ENCODE measurements at regions of chr15 and their contacts with region 1.

Region 1: GRCh38 chr15:70768257-70768883 is 5.0 kb upstream of the UACA start:
- DNase-seq: no peak
- H3K4me3 ChIP-seq: no peak overlapping the region
- H3K4me3 Mint-ChIP-seq: peak overlapping the region; percentile 7
- H3K27ac Mint-ChIP-seq: peak overlapping the region; percentile 2
- H3K4me1 ChIP-seq: peaks cover 51% of the 10 kb centered on the region
- H3K4me1 Mint-ChIP-seq: peaks cover 47% of the 10 kb centered on the region
- H3K27me3 ChIP-seq: no peaks in the 10 kb centered on the region
- H3K27me3 Mint-ChIP-seq: no peaks in the 10 kb centered on the region
- CTCF ChIP-seq: no peak

Region 2: GRCh38 chr15:70690491-70691257 is 77.7 kb before region 1 on chr15:
- CTCF ChIA-PET with region 1: no interaction called
- POLR2A ChIA-PET with region 1: no interaction called
- intact Hi-C with region 1: no loop called
- DNase-seq: no peak
- H3K4me3 ChIP-seq: no peak overlapping the region
- H3K4me3 Mint-ChIP-seq: no peak overlapping the region
- H3K27ac Mint-ChIP-seq: no peak overlapping the region
- H3K4me1 ChIP-seq: peaks cover 30% of the 10 kb centered on the region
- H3K4me1 Mint-ChIP-seq: peaks cover 12% of the 10 kb centered on the region
- H3K27me3 ChIP-seq: no peaks in the 10 kb centered on the region
- H3K27me3 Mint-ChIP-seq: no peaks in the 10 kb centered on the region
- CTCF ChIP-seq: no peak

Region 3: DNA sequence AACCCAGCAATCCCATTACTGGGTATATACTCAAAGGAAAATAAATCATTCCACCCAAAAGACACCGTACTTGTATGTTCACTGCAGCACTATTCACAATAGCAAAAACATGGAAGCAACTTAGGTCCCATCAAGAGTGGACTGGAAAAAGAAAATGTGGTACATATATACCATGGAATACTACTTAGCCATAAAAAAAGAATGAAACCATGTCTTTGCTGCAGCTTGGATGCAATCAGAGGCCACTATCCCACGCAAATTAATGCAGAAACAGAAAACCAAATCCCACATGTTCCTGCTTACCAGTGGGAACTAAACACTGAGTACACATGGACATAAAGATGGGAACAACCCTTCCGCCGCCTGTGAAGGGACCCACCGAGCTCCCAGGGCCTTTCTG is 39.2 kb before region 1 on chr15:
- CTCF ChIA-PET with region 1: no interaction called
- POLR2A ChIA-PET with region 1: no interaction called
- intact Hi-C with region 1: no loop called
- DNase-seq: no peak
- H3K4me3 ChIP-seq: no peak overlapping the region
- H3K4me3 Mint-ChIP-seq: no peak overlapping the region
- H3K27ac Mint-ChIP-seq: no peak overlapping the region
- H3K4me1 ChIP-seq: peaks cover 7% of the 10 kb centered on the region; the same call in 1 of the 2 replicates
- H3K4me1 Mint-ChIP-seq: no peaks in the 10 kb centered on the region
- H3K27me3 ChIP-seq: no peaks in the 10 kb centered on the region
- H3K27me3 Mint-ChIP-seq: no peaks in the 10 kb centered on the region
- CTCF ChIP-seq: no peak

Region 4: DNA sequence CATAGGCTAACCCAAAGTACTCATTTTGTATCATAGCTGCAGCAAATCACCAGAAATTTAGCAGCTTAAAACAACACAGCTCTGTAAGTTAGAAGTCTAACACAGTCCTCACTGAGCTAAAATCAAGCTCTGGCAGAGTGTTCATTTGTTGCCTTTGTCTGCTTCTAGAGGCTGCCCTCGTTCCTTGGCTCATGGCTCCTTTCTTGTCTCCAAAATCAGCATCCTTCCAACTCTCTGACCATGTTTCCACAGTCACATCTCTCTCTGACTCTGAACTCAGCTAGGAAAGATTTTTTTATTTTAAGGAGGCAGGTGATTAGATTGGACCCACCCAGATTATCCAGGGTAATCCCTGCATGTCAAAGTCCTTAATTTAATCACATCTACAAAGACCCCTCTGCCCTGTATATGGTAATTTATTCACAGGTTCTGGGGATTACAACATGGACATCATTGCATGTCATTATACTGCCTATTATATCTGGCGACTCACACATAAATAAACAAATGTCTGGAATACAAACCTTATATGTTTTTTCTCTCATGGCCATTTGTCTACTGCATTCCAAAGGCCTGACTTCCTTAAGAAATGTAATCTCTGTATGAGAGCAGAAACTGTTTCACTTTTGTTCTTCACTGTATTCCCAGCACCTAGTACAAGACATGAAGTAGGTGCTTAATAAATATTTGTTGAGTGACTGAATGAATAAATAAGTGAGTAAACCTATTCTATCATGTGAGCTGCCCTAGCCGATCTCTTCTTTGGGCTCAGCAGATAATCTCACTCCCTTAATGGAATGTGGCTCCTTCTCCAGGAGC is 10.1 kb after region 1 on chr15:
- CTCF ChIA-PET with region 1: no interaction called
- POLR2A ChIA-PET with region 1: no interaction called
- intact Hi-C with region 1: loop called (anchors 1 kb)
- DNase-seq: no peak
- H3K4me3 ChIP-seq: no peak overlapping the region
- H3K4me3 Mint-ChIP-seq: peak overlapping the region; percentile 51
- H3K27ac Mint-ChIP-seq: peak overlapping the region; percentile 81
- H3K4me1 ChIP-seq: peaks cover 48% of the 10 kb centered on the region
- H3K4me1 Mint-ChIP-seq: peaks cover 47% of the 10 kb centered on the region
- H3K27me3 ChIP-seq: no peaks in the 10 kb centered on the region
- H3K27me3 Mint-ChIP-seq: no peaks in the 10 kb centered on the region
- CTCF ChIP-seq: no peak

Region 5: DNA sequence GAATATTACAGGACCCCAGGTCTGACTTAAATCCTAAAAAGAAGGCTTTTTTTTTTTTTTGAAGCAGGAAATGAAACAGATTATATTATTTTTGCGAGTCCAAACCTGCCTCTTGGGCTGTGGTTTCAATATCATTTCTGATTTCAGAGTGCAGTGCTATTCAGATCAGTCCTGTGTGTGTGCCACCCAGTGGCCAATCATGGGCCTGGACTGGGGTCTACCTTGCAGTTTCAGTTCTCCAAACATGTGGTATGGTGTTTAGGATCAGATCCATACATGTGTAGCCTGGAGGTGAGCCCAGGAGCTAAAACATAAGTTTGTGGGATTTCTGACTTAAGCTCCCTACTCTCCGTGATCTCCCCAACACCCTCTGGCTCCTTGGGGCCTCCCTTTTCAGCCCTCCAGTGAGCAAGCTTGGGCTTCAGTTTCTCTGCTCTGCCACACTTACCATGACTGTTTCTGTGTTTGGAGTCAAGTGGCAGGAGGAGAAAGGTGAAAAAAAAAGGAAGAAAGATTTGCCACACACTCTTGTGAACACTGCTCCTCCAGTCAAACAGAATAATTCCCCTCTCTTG is 334.8 kb after region 1 on chr15:
- CTCF ChIA-PET with region 1: no interaction called
- POLR2A ChIA-PET with region 1: no interaction called
- intact Hi-C with region 1: no loop called
- DNase-seq: peak in 1 of 2 experiments; percentile 41
- H3K4me3 ChIP-seq: no peak overlapping the region
- H3K4me3 Mint-ChIP-seq: no peak overlapping the region
- H3K27ac Mint-ChIP-seq: no peak overlapping the region
- H3K4me1 ChIP-seq: no peaks in the 10 kb centered on the region
- H3K4me1 Mint-ChIP-seq: no peaks in the 10 kb centered on the region
- H3K27me3 ChIP-seq: no peaks in the 10 kb centered on the region
- H3K27me3 Mint-ChIP-seq: peaks cover 13% of the 10 kb centered on the region
- CTCF ChIP-seq: peak; percentile 53 to 64

Measured in Caco-2 (cell line).